CD8-positive, alpha-beta T cell (primary cell): ENCODE measurements at regions of chrX and their contacts with region 1.

Region 1: GRCh38 chrX:22495761-22496160 is 223.0 kb downstream of the CBLL2 start:
- DNase-seq: no peak
- ATAC-seq: no peak
- H3K4me3 ChIP-seq: no peak overlapping the region
- H3K4me3 Mint-ChIP-seq: no peak overlapping the region
- H3K27ac ChIP-seq: no peak overlapping the region
- H3K27ac Mint-ChIP-seq: no peak overlapping the region
- H3K4me1 ChIP-seq: no peaks in the 10 kb centered on the region
- H3K4me1 Mint-ChIP-seq: no peaks in the 10 kb centered on the region
- H3K27me3 ChIP-seq: no peaks in the 10 kb centered on the region
- H3K27me3 Mint-ChIP-seq: no peaks in the 10 kb centered on the region
- CTCF ChIP-seq: no peak

Region 2: GRCh38 chrX:21014326-21014725 is 1481.4 kb before region 1 on chrX:
- CTCF ChIA-PET with region 1: no interaction called
- POLR2A ChIA-PET with region 1: no interaction called
- intact Hi-C with region 1: loop called in 1 of 2 experiments (anchors 10 kb)
- DNase-seq: no peak
- ATAC-seq: no peak
- H3K4me3 ChIP-seq: no peak overlapping the region
- H3K4me3 Mint-ChIP-seq: no peak overlapping the region
- H3K27ac ChIP-seq: no peak overlapping the region
- H3K27ac Mint-ChIP-seq: no peak overlapping the region
- H3K4me1 ChIP-seq: no peaks in the 10 kb centered on the region
- H3K4me1 Mint-ChIP-seq: no peaks in the 10 kb centered on the region
- H3K27me3 ChIP-seq: no peaks in the 10 kb centered on the region
- H3K27me3 Mint-ChIP-seq: no peaks in the 10 kb centered on the region
- CTCF ChIP-seq: no peak